Activated CD8-positive, alpha-beta T cell treated with anti-CD3 and anti-CD28 coated beads for 36 hours (primary cell): ENCODE measurements at regions of chr12 and their contacts with region 1.

Region 1: DNA sequence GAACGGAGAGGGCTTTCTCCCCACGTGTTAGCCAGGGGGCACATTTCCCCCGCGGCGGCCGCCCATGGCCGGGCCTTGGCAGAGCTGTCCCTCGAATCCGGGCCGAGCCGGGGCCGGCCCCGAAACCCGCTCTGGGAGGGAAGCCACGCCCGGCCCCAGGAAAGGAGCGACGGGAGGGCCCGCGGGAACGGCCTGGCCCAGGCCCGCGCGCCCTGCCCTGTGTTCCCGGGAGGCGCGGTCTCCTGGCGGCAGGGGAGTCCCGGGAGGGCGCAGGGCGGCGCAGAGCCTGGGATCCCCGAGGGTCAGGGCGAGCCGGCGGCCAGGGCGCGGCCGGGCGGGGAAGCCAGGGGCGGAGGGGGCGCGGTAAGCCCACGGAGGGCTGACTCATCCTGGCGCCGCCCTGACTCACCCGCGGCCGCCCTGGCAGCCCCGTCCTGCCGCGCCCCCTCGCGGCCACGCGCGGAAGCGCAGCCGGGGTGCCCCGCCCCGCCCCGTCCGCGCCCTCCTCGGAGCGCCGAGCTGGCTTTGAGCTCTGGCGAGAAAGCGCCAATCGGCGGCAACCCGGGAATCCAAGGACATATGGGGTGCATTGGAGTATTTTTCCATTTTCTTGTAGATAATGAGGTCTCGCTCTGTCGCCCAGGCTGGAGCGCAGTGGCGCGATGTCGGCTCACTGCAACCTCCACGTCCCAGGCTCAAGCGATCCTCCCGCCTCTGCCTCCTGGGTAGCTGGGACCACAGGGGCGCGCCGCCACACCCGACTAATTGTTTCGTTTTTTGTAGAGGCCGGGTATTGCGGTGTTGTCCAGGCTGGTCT is 31.8 kb upstream of the PLEKHG6 start:
- DNase-seq: peak; percentile 84
- ATAC-seq: peak; percentile 98
- H3K4me3 Mint-ChIP-seq: peak overlapping the region; percentile 72
- H3K27ac Mint-ChIP-seq: peak overlapping the region; percentile 78
- H3K4me1 Mint-ChIP-seq: peaks cover 5% of the 10 kb centered on the region
- H3K27me3 Mint-ChIP-seq: peaks cover 21% of the 10 kb centered on the region
- CTCF ChIP-seq: peak; percentile 82

Region 2: GRCh38 chr12:6056406-6057240 is 222.0 kb before region 1 on chr12:
- CTCF ChIA-PET with region 1: interaction called, 50 read pairs
- POLR2A ChIA-PET with region 1: no interaction called
- intact Hi-C with region 1: no loop called
- DNase-seq: peak; percentile 63
- ATAC-seq: peak; percentile 84
- H3K4me3 Mint-ChIP-seq: peak overlapping the region; percentile 58
- H3K27ac Mint-ChIP-seq: peak overlapping the region; percentile 60
- H3K4me1 Mint-ChIP-seq: peaks cover 5% of the 10 kb centered on the region
- H3K27me3 Mint-ChIP-seq: no peaks in the 10 kb centered on the region
- CTCF ChIP-seq: peak; percentile 20

Region 3: DNA sequence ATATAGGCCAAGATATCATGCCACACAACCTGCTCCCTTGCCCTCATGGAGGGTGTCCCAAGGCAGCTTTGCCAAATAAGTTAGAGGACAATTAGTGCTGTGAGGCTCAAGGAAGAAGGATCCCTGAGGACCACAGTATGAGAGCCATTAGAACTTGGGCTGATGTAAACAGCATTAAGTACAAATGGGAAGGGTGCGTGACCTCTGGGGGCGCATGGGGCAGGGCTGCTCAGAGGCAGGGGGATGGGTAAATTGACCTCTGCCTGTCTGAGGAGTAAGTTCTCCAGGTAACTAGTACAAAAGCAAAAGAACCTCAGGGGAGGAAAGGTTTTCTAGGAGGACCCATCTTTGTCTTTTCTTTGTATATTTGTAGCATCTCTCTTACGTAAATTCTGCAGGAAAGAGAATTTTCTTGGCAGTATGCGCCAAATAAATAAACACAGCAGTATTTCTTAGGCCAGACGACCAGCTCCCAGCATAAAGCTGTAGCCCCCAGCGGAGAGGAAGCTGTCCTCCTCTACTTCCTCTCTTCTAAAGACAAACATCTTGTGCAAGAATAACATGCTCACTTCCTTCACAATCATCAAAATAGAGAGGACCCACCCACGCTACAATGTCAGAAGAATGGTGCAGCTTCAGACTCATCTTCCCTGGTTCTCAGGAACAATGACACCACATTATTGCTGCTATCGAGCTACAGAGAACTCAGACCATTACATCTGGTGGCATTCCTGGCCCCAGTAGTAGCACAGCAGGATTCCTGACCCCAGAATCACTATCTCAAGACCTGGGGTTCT is 137.8 kb before region 1 on chr12:
- CTCF ChIA-PET with region 1: interaction called, 10 read pairs
- POLR2A ChIA-PET with region 1: no interaction called
- intact Hi-C with region 1: no loop called
- DNase-seq: peak; percentile 73
- ATAC-seq: peak; percentile 75
- H3K4me3 Mint-ChIP-seq: peak overlapping the region; percentile 54
- H3K27ac Mint-ChIP-seq: peak overlapping the region; percentile 95
- H3K4me1 Mint-ChIP-seq: peaks cover 47% of the 10 kb centered on the region
- H3K27me3 Mint-ChIP-seq: no peaks in the 10 kb centered on the region
- CTCF ChIP-seq: no peak

Region 4: DNA sequence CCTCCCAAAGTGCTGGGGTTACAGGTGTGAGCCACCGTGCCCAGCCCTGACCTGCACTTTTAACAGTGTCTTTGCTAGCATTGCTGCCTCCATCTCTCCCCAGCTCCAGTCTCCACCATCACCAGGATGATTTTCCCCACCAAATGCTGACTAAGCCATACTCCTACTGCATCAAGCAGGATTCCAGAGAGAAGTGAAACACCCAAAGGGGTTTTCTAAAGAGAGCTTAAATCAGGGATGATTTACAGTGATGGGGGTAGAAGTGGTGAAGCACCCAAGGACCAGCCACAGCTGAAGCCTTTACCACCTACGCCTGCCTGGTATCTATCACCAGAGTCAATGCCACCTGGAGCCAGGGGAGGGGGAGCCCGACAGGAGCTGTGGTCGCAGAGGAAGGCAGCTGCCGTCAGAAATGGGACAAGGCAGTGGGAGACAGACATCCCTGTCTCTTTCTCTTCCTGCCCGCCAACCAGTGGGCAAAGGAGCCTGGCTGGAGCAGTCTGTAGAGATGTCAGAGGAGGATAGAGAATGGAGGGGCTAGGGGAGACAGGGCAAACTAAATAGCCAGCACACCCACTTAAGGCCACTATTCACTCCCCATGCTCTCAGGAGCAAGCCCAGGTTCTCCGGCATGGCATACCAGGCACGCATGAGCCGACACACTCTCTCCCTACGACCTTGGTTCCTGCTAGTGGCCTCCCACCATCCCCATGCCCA is 100.8 kb before region 1 on chr12:
- CTCF ChIA-PET with region 1: no interaction called
- POLR2A ChIA-PET with region 1: no interaction called
- intact Hi-C with region 1: no loop called
- DNase-seq: no peak
- ATAC-seq: no peak
- H3K4me3 Mint-ChIP-seq: no peak overlapping the region
- H3K27ac Mint-ChIP-seq: no peak overlapping the region
- H3K4me1 Mint-ChIP-seq: no peaks in the 10 kb centered on the region
- H3K27me3 Mint-ChIP-seq: no peaks in the 10 kb centered on the region
- CTCF ChIP-seq: no peak

Region 5: GRCh38 chr12:6187948-6188793 is 90.5 kb before region 1 on chr12:
- CTCF ChIA-PET with region 1: interaction called, 160 read pairs
- POLR2A ChIA-PET with region 1: interaction called, 4 read pairs
- intact Hi-C with region 1: no loop called
- DNase-seq: no peak
- ATAC-seq: no peak
- H3K4me3 Mint-ChIP-seq: no peak overlapping the region
- H3K27ac Mint-ChIP-seq: no peak overlapping the region
- H3K4me1 Mint-ChIP-seq: peaks cover 15% of the 10 kb centered on the region
- H3K27me3 Mint-ChIP-seq: peaks cover 6% of the 10 kb centered on the region
- CTCF ChIP-seq: no peak

Region 6: GRCh38 chr12:6230321-6231110 is 48.1 kb before region 1 on chr12:
- CTCF ChIA-PET with region 1: interaction called, 23 read pairs
- POLR2A ChIA-PET with region 1: no interaction called
- intact Hi-C with region 1: no loop called
- DNase-seq: peak; percentile 86
- ATAC-seq: peak; percentile 86
- H3K4me3 Mint-ChIP-seq: peak overlapping the region; percentile 56
- H3K27ac Mint-ChIP-seq: peak overlapping the region; percentile 85
- H3K4me1 Mint-ChIP-seq: peaks cover 28% of the 10 kb centered on the region
- H3K27me3 Mint-ChIP-seq: no peaks in the 10 kb centered on the region
- CTCF ChIP-seq: no peak